ENCODE measurements at regions of chr5 and their contacts with region 1.

Region 1: GRCh38 chr5:112921833-112922817 is at the start of gene REEP5:
- DNase-seq: peak; percentile 90
- H3K4me3 ChIP-seq: peak within 1 kb of the TSS; percentile 85
- H3K27ac ChIP-seq: peak within 1 kb of the TSS; percentile 92
- H3K4me1 ChIP-seq: peaks cover 70% of the 10 kb centered on the region
- CTCF ChIP-seq: peak; percentile 82
- total RNA-seq, gene REEP5: 20.9 and 25.5 TPM in 2 replicates

Region 2: GRCh38 chr5:112707187-112708102 is 214.7 kb before region 1 on chr5:
- CTCF ChIA-PET with region 1: interaction called, 3 read pairs
- POLR2A ChIA-PET with region 1: no interaction called
- intact Hi-C with region 1: loop called (anchors 2 kb)
- DNase-seq: peak; percentile 99
- H3K4me3 ChIP-seq: peak overlapping the region; percentile 90
- H3K27ac ChIP-seq: peak overlapping the region; percentile 64
- H3K4me1 ChIP-seq: peaks cover 27% of the 10 kb centered on the region
- CTCF ChIP-seq: 0 out of 2 replicates have a peak, but pooled peaks have one; percentile 24

Region 3: DNA sequence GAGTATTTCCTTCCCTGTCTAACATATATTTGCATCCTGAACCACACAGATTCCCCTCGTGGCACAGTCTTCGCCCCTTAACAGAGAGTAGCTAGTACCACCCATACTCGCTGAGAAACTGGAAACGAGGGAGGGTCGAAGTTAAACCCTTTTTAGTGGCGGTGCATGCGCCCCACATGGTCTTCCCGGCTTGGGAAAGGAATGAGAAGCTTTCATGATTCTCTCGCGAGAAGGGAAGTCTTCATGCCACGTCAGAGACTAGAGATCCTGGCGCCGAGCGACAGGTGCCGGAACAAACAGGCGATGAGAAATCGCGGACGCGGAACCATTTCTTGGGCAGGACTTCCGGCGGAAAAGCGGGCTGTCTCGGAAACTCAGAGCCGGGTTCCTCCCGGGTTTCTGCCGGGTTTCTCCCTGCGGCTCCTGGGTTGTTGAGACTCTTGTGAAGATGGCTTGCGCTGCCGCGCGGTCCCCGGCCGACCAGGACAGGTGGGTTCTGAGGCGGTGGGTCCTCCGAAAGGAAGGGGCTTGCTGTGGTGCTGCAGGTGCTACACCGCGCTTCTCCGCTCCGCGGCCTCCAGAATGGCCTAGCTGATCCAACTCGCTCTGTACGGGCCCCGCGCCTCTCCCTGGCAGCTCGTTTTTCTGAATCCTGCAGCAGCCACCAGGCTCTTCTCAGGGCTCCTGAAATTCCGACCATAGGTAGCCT is 61.0 kb before region 1 on chr5 and contains the start of gene SRP19:
- CTCF ChIA-PET with region 1: interaction called, 3 read pairs
- POLR2A ChIA-PET with region 1: interaction called, 5 read pairs
- intact Hi-C with region 1: loop called (anchors 2 kb)
- DNase-seq: peak; percentile 97
- H3K4me3 ChIP-seq: peak within 1 kb of the TSS; percentile 76
- H3K27ac ChIP-seq: peak within 1 kb of the TSS; percentile 36
- H3K4me1 ChIP-seq: peaks cover 30% of the 10 kb centered on the region
- CTCF ChIP-seq: no peak
- total RNA-seq, gene SRP19: 32.9 and 48.1 TPM in 2 replicates

Region 4: GRCh38 chr5:112968411-112969106 is 46.4 kb after region 1 on chr5:
- CTCF ChIA-PET with region 1: interaction called, 3 read pairs
- POLR2A ChIA-PET with region 1: interaction called, 3 read pairs
- intact Hi-C with region 1: loop called (anchors 1 kb)
- DNase-seq: no peak
- H3K4me3 ChIP-seq: no peak overlapping the region
- H3K27ac ChIP-seq: no peak overlapping the region
- H3K4me1 ChIP-seq: peaks cover 8% of the 10 kb centered on the region
- CTCF ChIP-seq: no peak

Region 5: DNA sequence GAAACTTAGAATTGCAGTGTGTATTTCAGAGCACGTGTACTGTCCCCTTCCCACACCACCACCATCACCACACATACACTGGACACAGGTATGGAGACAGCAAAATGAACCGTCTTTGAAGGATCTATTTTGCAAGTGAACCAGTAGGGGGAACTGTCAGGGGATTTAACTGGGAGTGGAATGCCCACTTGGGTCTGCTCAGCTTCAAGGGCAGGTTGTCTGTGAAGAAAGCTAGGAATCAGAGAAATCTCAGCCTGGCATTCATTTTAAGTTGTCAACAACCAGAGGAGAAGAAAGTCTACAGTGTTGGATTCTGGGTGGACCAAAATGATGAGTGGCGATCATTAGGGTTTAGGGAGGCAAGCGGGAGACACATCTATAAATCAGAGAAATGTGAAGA is 201.5 kb after region 1 on chr5:
- CTCF ChIA-PET with region 1: no interaction called
- POLR2A ChIA-PET with region 1: no interaction called
- intact Hi-C with region 1: no loop called
- DNase-seq: peak; percentile 8
- H3K4me3 ChIP-seq: no peak overlapping the region
- H3K27ac ChIP-seq: no peak overlapping the region
- H3K4me1 ChIP-seq: no peaks in the 10 kb centered on the region
- CTCF ChIP-seq: peak; percentile 64

Region 6: GRCh38 chr5:113520429-113520828 is 598.3 kb after region 1 on chr5:
- CTCF ChIA-PET with region 1: no interaction called
- POLR2A ChIA-PET with region 1: interaction called, 3 read pairs
- intact Hi-C with region 1: loop called (anchors 5 kb)
- DNase-seq: no peak
- H3K4me3 ChIP-seq: no peak overlapping the region
- H3K27ac ChIP-seq: peak overlapping the region; percentile 10
- H3K4me1 ChIP-seq: peaks cover 62% of the 10 kb centered on the region
- CTCF ChIP-seq: no peak

Region 7: DNA sequence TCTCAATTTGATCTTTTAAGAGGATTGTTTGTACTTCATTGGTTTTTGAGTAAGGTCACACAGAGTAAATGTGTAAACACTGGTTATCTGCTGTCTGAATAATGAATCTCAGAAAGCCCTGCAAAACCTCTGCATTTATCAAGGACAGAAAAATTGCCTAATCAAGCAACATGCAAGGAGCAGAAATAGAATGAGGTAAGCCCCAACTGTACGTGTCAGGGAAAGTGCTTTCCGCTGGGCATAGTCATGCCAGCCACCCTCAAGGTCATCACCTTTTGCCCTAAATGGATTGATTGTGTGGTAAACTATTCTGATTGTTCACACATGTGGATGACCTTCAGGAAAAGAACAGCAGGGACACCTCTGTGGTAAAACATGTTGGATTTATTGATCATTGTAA is 1062.8 kb after region 1 on chr5:
- CTCF ChIA-PET with region 1: no interaction called
- POLR2A ChIA-PET with region 1: no interaction called
- intact Hi-C with region 1: no loop called
- DNase-seq: no peak
- H3K4me3 ChIP-seq: no peak overlapping the region
- H3K27ac ChIP-seq: no peak overlapping the region
- H3K4me1 ChIP-seq: no peaks in the 10 kb centered on the region
- CTCF ChIP-seq: no peak